Esophagus muscularis mucosa (tissue), 4 donors: ENCODE measurements at regions of chr17 and their contacts with region 1.

Region 1: GRCh38 chr17:40021451-40021971 is 6.3 kb downstream of the CSF3 start:
- DNase-seq: no peak
- H3K4me3 ChIP-seq: no peak overlapping the region
- H3K27ac ChIP-seq: peak overlapping the region; percentile 45 to 69 (median 64)
- H3K4me1 ChIP-seq: peaks cover 49 to 92% (median 86%) of the 10 kb centered on the region in 4 donors
- H3K27me3 ChIP-seq: no peaks in the 10 kb centered on the region
- CTCF ChIP-seq: no peak
- EP300 ChIP-seq: no peak
- POLR2A ChIP-seq: no peak

Region 2: DNA sequence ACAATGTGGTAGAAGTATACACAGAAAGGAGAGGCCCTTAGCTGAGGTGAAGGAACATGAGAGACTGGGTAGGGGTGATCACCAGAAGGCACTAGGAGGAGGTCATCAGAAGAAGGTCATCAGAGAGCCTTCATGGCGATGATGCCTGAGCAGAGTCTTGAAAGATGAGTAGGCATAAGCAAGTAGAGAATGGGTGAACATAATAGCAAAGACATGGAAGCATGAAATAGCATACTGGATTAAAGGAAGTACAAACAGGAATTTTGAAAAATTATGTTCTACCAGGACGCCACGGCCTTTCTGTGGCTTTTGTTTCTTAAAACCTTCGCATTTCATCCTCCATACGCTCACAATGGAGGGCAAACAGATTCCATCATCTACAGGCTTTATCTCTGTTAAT is 160.3 kb before region 1 on chr17:
- intact Hi-C with region 1: no loop called
- DNase-seq: no peak
- H3K4me3 ChIP-seq: no peak overlapping the region
- H3K27ac ChIP-seq: no peak overlapping the region
- H3K4me1 ChIP-seq: peaks cover 6 to 11% (median 9%) of the 10 kb centered on the region in 4 donors
- H3K27me3 ChIP-seq: peaks cover 0 to 74% (median 25%) of the 10 kb centered on the region in 4 donors
- CTCF ChIP-seq: no peak
- EP300 ChIP-seq: no peak
- POLR2A ChIP-seq: no peak

Region 3: DNA sequence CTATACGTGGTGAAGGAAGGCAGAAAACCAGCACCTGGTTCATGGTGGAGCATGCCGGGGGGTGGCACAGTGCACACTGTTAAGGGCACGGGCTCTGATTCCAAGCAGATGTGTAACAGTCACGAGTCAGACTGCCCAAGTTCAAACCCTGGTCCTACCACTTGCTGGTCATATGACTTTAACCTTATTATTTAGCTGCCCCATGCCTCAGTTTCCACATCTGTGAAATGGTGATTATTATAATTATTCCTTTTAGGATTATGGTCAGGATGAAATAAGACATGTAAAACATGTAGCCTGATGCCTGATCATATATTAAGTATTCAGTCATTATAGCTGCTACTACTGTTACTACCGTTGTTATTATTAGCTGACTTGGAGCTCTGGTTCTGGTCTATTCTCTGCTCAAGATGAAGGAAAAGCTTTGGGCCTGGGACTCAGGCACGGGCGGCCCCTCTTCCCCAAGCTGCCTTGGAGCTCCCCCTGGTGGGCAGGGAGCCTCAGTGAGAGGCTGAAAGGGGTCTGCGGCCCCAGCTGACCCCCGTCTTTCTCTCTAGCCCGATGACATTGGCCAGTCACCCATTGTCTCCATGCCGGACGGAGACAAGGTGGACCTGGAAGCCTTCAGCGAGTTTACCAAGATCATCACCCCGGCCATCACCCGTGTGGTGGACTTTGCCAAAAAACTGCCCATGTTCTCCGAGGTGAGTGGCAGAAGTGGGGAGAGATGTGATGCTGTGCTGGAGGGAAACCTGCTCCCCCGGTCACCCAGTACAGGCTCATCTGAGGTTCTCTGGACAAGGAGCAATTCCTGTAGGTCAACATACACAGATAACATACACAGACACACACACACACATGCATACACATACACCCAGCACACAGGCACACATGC is 64.9 kb after region 1 on chr17:
- intact Hi-C with region 1: loop called (anchors 5 kb)
- DNase-seq: no peak
- H3K4me3 ChIP-seq: no peak overlapping the region
- H3K27ac ChIP-seq: peak overlapping the region; percentile 44 to 63 (median 50)
- H3K4me1 ChIP-seq: peaks cover 23 to 52% (median 43%) of the 10 kb centered on the region in 4 donors
- H3K27me3 ChIP-seq: no peaks in the 10 kb centered on the region
- CTCF ChIP-seq: peak; percentile 86 to 95 (median 93)
- EP300 ChIP-seq: no peak
- POLR2A ChIP-seq: no peak

Region 4: DNA sequence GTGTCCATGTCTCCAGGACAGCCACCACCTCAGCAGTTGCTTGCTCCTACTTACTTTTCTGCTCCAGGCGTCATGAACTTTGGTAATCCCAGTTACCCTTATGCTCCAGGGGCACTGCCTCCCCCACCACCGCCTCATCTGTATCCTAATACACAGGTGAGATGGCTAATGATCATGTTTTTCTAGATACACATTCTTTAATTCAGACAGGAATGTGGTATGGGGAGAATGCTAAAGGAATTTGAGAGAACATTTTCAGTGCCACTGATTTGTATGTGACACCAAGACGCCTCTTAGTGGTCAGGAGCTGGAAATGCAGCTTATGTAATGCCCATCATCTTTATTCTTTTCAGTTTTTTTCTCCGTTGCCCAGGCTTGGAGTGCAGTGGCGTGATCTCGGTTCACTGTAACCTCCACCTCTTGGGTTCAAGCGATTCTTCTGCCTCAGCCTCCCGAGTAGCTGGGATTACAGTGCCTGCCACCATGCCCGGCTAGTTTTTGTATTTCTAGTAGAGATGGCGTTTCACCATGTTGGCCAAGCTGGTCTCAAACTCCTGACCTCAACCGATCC is 146.8 kb after region 1 on chr17:
- intact Hi-C with region 1: loop called (anchors 5 kb)
- DNase-seq: no peak
- H3K4me3 ChIP-seq: no peak overlapping the region
- H3K27ac ChIP-seq: peak overlapping the region; percentile 68 to 72 (median 70)
- H3K4me1 ChIP-seq: peaks cover 0 to 18% (median 14%) of the 10 kb centered on the region in 4 donors
- H3K27me3 ChIP-seq: no peaks in the 10 kb centered on the region
- CTCF ChIP-seq: peak; percentile 83 to 95 (median 85)
- EP300 ChIP-seq: no peak
- POLR2A ChIP-seq: no peak

Region 5: GRCh38 chr17:40191237-40192208 is 170.0 kb after region 1 on chr17:
- intact Hi-C with region 1: loop called (anchors 5 kb)
- DNase-seq: peak; percentile 95
- H3K4me3 ChIP-seq: peak overlapping the region; percentile 60 to 80 (median 62)
- H3K27ac ChIP-seq: peak overlapping the region; percentile 55 to 75 (median 74)
- H3K4me1 ChIP-seq: peaks cover 17 to 27% (median 22%) of the 10 kb centered on the region in 4 donors
- H3K27me3 ChIP-seq: no peaks in the 10 kb centered on the region
- CTCF ChIP-seq: peak; percentile 65 to 73 (median 72)
- EP300 ChIP-seq: no peak
- POLR2A ChIP-seq: no peak